ENCODE measurements at regions of chr12 and their contacts with region 1.

Region 1: DNA sequence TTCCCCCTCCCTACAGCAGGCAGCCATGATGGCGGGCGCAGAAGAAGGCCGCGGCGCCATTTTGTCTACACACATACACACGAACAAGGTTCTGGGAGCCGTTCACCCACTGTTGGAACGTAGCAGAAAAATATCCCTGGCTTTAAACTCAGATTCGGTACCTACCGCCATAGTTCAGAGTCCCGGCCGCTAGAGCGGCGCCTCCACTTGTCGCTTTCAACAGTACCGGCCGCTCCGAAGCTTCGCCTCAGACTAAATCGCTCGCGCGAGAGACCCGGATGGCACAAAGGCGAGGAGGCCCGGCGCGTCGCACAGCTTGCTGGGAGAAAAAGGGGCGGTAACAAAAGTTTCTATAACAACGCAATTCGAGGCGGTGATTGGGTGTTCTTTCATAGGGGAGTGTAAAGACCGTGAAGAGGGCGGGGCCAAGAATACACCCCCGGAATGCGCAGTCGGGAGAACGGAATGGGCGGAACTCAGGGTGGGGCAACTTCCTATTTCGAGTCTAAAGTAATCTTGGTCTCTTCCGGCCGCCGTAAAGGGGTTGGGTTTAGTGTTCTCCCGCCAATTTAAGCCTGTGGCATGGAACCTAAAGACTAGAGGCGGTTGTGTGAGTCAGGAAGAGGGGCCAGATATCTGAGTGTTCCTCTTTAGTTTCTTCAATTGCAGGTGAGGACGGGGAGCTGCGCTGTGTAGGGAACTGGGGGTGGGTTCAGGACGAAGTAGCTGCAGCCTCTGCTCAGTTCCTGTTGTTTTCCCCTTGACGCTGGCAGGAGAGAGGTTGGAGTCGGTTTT is at the starts of genes KNTC1 and RSRC2:
- DNase-seq: peak; percentile 99 to 100
- ATAC-seq: peak; percentile 92 to 93
- H3K4me3 ChIP-seq: peak within 1 kb of the TSS; percentile 69
- H3K27ac ChIP-seq: peak within 1 kb of the TSS; percentile 95
- H3K4me1 ChIP-seq: peaks cover 28% of the 10 kb centered on the region
- CTCF ChIP-seq: no peak
- EP300 ChIP-seq: no peak
- POLR2A ChIP-seq: peak; percentile 92
- RAD21 ChIP-seq: peak in 1 of 2 experiments; percentile 3; a peak in 1 of 5 replicates
- polyA plus RNA-seq, gene KNTC1: 61.1 and 68.7 TPM in 2 replicates
- polyA plus RNA-seq, gene RSRC2: 43.0 and 83.3 TPM in 2 replicates

Region 2: DNA sequence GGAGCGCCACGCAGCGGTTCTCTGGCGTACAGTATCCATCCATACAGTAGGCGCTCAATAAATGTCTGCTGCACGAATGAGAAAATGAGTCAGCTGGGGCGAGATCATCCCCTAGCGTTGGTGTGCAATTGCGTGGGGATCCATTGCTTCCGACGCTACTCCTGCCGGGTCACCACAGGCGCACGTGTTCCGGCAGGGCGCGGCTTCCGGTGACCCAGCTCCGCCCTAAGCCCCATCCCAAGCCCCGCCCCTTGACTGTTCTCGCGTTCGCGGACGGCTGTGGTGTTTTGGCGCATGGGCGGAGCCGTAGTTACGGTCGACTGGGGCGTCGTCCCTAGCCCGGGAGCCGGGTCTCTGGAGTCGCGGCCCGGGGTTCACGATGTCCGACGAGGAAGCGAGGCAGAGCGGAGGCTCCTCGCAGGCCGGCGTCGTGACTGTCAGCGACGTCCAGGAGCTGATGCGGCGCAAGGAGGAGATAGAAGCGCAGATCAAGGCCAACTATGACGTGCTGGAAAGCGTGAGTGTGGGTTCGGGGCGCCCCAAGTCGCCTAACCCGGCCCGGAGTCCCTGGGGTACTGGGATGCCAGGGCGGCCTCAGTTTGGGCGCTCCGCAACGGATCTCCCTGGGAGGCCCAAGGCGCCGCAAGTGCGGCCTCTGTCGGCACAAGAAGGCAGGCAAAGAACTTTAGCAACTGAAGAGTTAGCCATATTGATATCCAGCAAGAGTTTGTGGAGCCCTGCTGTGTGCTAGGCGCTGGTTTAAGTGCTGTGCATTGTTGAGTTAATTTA is 638.2 kb before region 1 on chr12 and contains the start of gene PSMD9:
- CTCF ChIA-PET with region 1: no interaction called
- POLR2A ChIA-PET with region 1: no interaction called
- DNase-seq: peak; percentile 97 to 99
- ATAC-seq: peak; percentile 96 to 97
- H3K4me3 ChIP-seq: peak within 1 kb of the TSS; percentile 69
- H3K27ac ChIP-seq: peak within 1 kb of the TSS; percentile 86 to 92
- H3K4me1 ChIP-seq: peaks cover 22% of the 10 kb centered on the region
- CTCF ChIP-seq: peak; percentile 65
- EP300 ChIP-seq: peak in 1 of 2 experiments; percentile 29; a peak in 1 of 5 replicates
- POLR2A ChIP-seq: peak; percentile 72
- RAD21 ChIP-seq: peak; percentile 68 to 76; a peak in 4 of 5 replicates
- polyA plus RNA-seq, gene PSMD9: 81.4 and 89.3 TPM in 2 replicates

Region 3: GRCh38 chr12:122500685-122501488 is 26.0 kb before region 1 on chr12 and contains the start of gene ZCCHC8:
- CTCF ChIA-PET with region 1: interaction called, 4 read pairs
- POLR2A ChIA-PET with region 1: interaction called, 53 read pairs
- DNase-seq: peak; percentile 98 to 99
- ATAC-seq: peak; percentile 95 to 96
- H3K4me3 ChIP-seq: peak within 1 kb of the TSS; percentile 70
- H3K27ac ChIP-seq: peak within 1 kb of the TSS; percentile 94 to 98
- H3K4me1 ChIP-seq: peaks cover 20% of the 10 kb centered on the region
- CTCF ChIP-seq: peak; percentile 30
- EP300 ChIP-seq: no peak
- POLR2A ChIP-seq: peak; percentile 63
- RAD21 ChIP-seq: 0 out of 5 replicates have a peak, but pooled peaks of 1 of the 2 experiments have one; percentile 12
- polyA plus RNA-seq, gene ZCCHC8: 35.6 and 40.1 TPM in 2 replicates

Region 4: DNA sequence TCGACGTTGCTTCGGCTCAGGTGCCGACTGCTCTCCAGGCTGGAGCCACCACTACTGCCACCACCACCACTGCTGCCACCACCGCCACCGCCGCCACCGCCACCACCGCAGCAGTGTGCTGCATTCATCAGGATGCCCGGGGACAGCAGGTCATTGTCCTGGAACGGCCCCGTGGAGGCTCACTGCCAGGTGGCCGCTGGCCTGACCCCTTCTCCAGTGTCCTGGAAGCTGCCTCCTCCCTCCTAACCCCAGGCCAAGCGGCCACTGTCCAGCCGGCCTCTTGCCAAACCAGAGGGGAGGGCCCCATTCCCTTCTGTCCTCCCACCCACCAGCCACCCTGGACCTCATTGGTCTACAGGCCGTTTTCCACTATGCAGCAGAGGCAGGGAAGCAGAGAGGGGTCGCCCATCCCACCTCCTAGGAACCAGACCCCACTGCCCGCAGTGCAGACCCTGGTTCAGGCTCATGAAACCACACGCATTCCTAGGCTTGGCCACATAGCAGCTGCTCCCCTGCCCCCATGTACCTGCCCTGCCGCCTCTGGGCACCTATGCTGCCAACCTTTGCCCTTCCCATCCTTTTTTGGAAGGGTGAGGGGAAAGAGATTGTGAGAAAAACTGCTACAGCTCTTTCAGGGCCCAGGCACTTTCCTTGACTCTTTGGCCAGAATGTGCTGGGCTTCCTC is 468.8 kb after region 1 on chr12:
- CTCF ChIA-PET with region 1: no interaction called
- POLR2A ChIA-PET with region 1: no interaction called
- DNase-seq: no peak
- ATAC-seq: no peak
- H3K4me3 ChIP-seq: no peak overlapping the region
- H3K27ac ChIP-seq: no peak overlapping the region
- H3K4me1 ChIP-seq: no peaks in the 10 kb centered on the region
- CTCF ChIP-seq: no peak
- EP300 ChIP-seq: no peak
- POLR2A ChIP-seq: no peak
- RAD21 ChIP-seq: no peak